ENCODE measurements at regions of chr11 and their contacts with region 1.

Region 1: GRCh38 chr11:126310228-126310991 is 6.5 kb downstream of the DCPS start:
- DNase-seq: peak; percentile 65
- CTCF ChIP-seq: peak; percentile 82

Region 2: DNA sequence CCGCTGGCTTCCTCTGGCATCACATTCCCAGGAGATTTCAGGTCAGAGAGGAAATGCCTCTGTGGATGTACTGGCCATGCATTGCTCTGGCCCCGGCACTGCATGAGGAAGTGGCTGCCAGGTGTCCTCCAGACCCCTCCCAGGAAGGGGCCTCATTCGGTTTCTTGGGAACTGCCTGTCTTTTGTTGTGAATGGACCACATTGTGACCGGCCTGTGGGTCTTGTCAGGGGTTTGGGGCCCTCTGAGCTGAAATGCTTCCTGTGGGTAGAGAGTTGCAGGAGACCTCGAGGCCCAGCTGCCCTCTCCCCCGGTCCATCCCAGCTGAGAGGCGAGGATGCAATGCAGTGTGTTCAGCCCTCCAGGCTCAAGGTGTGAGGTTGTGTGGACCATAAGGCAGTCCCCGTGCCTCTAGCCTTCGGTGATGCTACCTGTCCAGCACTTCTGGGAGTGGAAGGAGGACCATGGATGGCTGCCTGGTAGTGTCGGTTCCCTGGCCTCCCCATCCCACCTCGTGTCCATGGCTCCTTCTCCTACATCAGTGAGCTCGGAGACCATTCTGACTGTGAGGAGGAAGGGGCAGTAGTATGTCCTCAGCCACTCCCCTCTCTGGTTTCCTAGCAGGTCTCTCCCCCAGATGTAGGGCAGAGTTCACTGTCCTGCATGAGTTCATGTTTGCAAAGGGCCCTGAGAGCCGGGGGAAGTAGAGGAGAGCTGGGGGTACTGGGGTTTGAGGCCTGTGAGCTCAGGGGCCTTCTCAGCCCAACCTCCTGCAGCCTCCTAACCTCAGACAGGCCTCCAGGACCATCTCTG is 26.5 kb after region 1 on chr11:
- CTCF ChIA-PET with region 1: interaction called, 10 read pairs
- POLR2A ChIA-PET with region 1: no interaction called
- DNase-seq: no peak
- CTCF ChIP-seq: no peak

Region 3: DNA sequence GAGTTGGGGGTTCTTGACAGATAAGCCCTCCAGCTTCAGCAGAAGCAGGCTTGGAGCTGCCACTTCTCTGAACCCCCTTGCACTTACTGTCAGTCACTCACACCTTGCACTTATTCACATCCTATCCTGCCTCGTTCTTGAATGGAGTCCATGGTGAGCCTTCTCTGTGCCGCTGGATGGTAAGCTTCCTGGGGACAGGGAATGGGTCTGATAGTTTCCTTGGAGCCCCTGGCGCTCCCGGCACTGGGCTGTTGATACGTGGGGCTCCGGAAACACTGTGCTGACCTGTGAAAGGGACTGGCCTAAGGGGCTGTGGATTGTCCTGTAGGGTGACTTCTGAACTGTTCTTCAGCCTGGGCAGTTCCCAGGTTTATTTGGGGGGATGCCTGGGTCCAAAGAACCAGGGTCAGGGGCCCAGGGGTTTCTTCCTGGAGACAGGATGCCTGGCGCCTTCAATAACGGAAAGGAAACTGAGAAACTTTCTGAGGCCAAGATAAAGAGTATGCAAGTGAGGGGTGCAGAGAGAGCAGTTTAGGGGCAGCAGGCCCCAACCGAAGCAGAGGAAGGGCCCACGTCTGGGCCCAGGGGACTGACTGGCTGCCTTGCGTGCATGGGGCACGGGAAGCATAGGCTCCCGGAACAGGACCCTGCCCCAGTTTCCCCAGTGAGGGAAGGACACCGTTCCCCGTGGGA is 44.4 kb after region 1 on chr11:
- CTCF ChIA-PET with region 1: interaction called, 11 read pairs
- POLR2A ChIA-PET with region 1: no interaction called
- DNase-seq: no peak
- CTCF ChIP-seq: no peak

Measured in GM10248 (cell line).